HepG2 (cell line): ENCODE measurements at regions of chr7 and their contacts with region 1.

Region 1: DNA sequence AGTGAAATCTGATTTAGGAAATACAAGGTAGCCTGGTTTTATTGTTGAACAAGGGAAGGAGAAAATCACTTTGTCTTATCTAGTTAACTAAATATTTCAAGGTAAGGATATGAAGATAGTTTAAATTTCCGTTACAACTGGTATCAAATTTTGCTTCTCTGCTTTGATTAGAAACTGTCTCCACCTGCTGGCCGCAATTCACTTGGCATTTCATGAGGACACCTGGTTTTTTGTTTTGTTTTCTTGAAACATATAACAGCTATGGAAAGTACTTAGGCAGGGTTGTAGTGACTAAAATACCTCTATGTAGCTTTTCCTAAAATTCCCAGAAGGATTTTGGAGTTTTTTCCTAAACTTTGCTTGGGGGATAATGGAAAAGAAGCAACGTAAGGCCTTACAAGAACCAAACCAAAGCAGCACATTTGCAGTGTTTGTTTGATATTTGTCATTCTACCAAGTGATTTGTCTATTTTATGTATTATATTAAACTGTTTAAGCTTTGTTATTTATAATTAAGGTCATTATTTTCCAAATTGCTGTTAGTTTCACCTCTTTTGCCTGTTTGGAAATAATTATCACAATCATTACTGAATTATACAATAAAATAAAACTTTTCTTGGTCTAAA is 73.6 kb downstream of the AHCYL2 start:
- DNase-seq: peak; percentile 36
- ATAC-seq: no peak
- H3K4me3 ChIP-seq: no peak overlapping the region
- H3K27ac ChIP-seq: no peak overlapping the region
- H3K4me1 ChIP-seq: no peaks in the 10 kb centered on the region
- H3K27me3 ChIP-seq: no peaks in the 10 kb centered on the region
- CTCF ChIP-seq: peak; percentile 68
- EP300 ChIP-seq: no peak
- POLR2A ChIP-seq: no peak
- RAD21 ChIP-seq: peak; percentile 31; the same call in 1 of the 2 replicates

Region 2: GRCh38 chr7:129110258-129110981 is 188.0 kb before region 1 on chr7:
- CTCF ChIA-PET with region 1: no interaction called
- POLR2A ChIA-PET with region 1: no interaction called
- in situ Hi-C with region 1: no loop called
- intact Hi-C with region 1: no loop called
- DNase-seq: peak; percentile 18
- ATAC-seq: peak; percentile 90
- H3K4me3 ChIP-seq: no peak overlapping the region
- H3K27ac ChIP-seq: peak overlapping the region; percentile 31
- H3K4me1 ChIP-seq: peaks cover 13% of the 10 kb centered on the region
- H3K27me3 ChIP-seq: no peaks in the 10 kb centered on the region
- CTCF ChIP-seq: no peak
- EP300 ChIP-seq: no peak
- POLR2A ChIP-seq: no peak
- RAD21 ChIP-seq: no peak

Region 3: DNA sequence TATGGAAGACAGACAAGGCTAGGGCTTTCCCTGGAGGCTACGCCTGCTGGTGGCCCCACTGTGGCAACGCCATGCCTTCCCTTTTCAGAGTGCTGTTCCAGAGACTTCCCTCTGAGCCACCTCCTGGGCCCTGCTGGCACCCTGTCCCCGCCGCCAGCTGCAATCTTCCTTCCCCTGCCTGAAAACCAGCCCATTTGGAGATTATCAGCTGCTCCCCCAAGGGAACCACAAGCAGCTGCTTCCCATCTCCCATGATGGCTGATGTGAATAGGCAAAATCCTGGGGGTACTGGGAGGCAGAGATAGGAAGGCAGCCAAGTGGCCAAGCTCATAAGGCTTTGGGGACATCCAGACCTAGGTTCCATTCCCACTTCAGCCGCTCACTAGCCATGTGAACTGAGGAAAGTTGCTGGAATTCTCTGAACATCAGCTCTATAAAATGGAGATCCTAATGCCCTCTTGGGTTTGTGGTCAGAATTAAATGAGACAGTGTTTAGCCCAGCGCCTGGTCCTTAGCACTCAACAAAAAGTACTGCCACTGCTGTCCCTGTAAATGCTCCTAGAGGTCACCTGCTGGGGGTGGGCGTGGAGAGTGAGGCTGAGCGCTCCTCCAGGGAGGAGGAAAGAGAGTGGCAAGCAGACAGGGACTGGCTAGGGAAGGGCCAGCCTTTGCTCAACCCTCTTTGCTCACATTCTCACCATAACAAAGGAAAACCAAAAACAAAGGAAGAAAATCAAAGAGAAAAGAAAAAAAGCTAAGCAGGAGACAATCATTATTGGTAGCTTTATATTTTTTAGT is 148.0 kb before region 1 on chr7:
- CTCF ChIA-PET with region 1: no interaction called
- POLR2A ChIA-PET with region 1: no interaction called
- in situ Hi-C with region 1: no loop called
- intact Hi-C with region 1: no loop called
- DNase-seq: no peak
- ATAC-seq: no peak
- H3K4me3 ChIP-seq: no peak overlapping the region
- H3K27ac ChIP-seq: no peak overlapping the region
- H3K4me1 ChIP-seq: peaks cover 22% of the 10 kb centered on the region
- H3K27me3 ChIP-seq: no peaks in the 10 kb centered on the region
- CTCF ChIP-seq: no peak
- EP300 ChIP-seq: no peak
- POLR2A ChIP-seq: no peak
- RAD21 ChIP-seq: no peak

Region 4: GRCh38 chr7:129218514-129219062 is 79.8 kb before region 1 on chr7:
- CTCF ChIA-PET with region 1: interaction called, 23 read pairs
- POLR2A ChIA-PET with region 1: interaction called, 3 read pairs
- in situ Hi-C with region 1: loop called (anchors 5 kb)
- intact Hi-C with region 1: loop called (anchors 1 kb)
- DNase-seq: peak; percentile 81
- ATAC-seq: peak; percentile 82
- H3K4me3 ChIP-seq: peak overlapping the region in 1 of 3 experiments; percentile 35; a peak in 1 of 6 replicates
- H3K27ac ChIP-seq: no peak overlapping the region
- H3K4me1 ChIP-seq: peaks cover 34% of the 10 kb centered on the region
- H3K27me3 ChIP-seq: no peaks in the 10 kb centered on the region
- CTCF ChIP-seq: peak; percentile 96
- EP300 ChIP-seq: no peak
- POLR2A ChIP-seq: no peak
- RAD21 ChIP-seq: peak; percentile 90